ENCODE measurements at regions of chr2 and their contacts with region 1.

Region 1: DNA sequence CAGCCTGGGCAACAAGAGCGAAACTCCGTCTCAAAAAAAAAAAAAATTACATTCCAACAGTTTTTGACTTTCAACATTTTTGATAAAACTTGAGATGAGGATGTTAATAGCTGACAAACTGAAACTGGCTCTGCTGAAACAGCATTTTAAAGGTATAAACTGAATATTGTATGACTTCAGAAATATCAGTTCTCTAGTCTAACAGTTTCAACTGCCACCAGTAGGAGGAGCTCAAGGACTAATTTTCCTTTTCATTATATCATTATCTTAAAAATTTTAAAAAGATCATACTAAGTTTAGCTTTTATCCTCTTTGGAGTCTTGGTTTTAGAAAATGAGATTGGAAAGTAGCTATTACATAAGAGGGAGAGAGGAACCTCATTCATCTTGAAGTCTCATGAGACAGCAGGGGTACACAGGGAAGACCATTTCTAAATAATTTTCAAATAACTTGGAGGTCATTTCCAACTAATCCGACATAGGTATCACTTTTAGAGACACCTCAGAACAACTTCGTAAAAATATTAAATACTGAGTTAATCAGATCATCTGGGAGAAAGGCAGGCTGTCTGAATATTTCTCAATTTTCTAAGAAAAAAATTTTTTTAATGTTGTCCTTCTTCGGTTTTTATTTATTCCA is 37.6 kb upstream of the MCM6 start:
- DNase-seq: peak in 6 of 9 experiments; percentile 23 to 76 (median 52)
- ATAC-seq: peak; percentile 64
- H3K4me3 ChIP-seq: no peak overlapping the region
- H3K4me3 Mint-ChIP-seq: no peak overlapping the region
- H3K27ac ChIP-seq: no peak overlapping the region
- H3K27ac Mint-ChIP-seq: no peak overlapping the region
- H3K4me1 ChIP-seq: no peaks in the 10 kb centered on the region
- H3K4me1 Mint-ChIP-seq: peaks cover 4% of the 10 kb centered on the region
- H3K27me3 ChIP-seq: no peaks in the 10 kb centered on the region
- H3K27me3 Mint-ChIP-seq: no peaks in the 10 kb centered on the region
- CTCF ChIP-seq: peak; percentile 99

Region 2: DNA sequence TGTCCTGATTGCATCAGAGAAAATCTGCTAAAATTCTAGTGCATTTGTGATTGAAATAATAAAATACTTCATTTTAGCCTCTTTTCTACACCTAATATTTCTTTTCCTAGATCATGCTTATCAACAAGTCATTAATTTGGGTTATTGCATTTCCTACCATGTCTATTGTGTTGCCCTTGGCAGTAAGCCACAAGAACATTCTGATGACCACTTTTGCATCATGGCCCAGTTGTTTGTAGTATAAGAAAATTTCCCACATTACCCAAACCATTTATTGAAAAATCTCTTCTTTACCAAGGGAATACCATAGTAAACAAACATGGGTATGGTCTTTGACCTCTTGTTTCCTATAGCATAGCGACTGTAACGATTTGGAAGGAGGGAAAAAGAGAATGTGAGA is 306.3 kb before region 1 on chr2:
- CTCF ChIA-PET with region 1: no interaction called
- POLR2A ChIA-PET with region 1: no interaction called
- intact Hi-C with region 1: no loop called
- DNase-seq: no peak
- ATAC-seq: no peak
- H3K4me3 ChIP-seq: no peak overlapping the region
- H3K4me3 Mint-ChIP-seq: no peak overlapping the region
- H3K27ac ChIP-seq: no peak overlapping the region
- H3K27ac Mint-ChIP-seq: no peak overlapping the region
- H3K4me1 ChIP-seq: no peaks in the 10 kb centered on the region
- H3K4me1 Mint-ChIP-seq: no peaks in the 10 kb centered on the region
- H3K27me3 ChIP-seq: no peaks in the 10 kb centered on the region
- H3K27me3 Mint-ChIP-seq: no peaks in the 10 kb centered on the region
- CTCF ChIP-seq: no peak

Region 3: DNA sequence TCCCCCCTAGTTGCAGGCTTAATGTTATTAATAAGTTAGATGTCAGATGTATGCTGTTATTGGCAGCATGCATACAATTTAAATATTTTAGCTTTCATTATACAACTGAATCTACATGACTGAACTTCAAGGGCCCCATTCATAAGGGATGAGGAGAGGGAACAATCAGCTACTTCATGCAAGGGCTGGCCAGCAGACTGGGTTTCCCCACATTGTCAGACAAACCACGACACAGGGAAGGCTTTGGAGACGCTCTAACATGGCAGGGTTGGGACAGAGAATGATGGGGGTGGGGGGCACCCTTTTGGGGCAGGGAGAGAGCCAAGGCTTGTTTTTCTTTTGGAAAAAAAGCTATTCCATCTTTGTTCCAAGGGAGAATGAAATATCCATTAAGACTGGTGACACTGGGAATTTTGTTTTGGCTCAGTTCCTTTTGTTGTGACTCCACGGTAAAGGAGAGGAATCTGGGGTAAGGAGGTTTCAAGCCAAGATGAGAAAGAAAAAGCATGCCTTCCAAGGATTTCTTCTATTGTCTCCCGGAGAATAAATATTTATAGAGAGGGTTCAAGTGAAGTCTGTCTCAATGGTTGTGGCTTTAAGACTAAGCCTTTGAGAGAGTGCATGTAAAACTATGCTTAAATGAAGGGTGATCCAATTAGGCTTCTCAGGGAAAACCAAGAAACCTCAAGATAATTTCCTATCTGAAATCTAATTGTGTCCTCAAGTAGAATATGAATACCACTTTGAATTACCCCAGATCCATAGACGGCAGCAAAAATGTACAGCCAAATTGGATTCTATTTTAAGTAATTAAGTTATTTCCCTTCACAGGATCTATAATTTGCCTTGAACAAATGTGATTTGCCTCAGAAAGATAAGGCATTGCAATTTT is 198.7 kb after region 1 on chr2:
- CTCF ChIA-PET with region 1: interaction called, 4 read pairs
- POLR2A ChIA-PET with region 1: no interaction called
- intact Hi-C with region 1: loop called (anchors 2 kb)
- DNase-seq: peak in 3 of 9 experiments; percentile 58 to 71 (median 69)
- ATAC-seq: no peak
- H3K4me3 ChIP-seq: no peak overlapping the region
- H3K4me3 Mint-ChIP-seq: no peak overlapping the region
- H3K27ac ChIP-seq: no peak overlapping the region
- H3K27ac Mint-ChIP-seq: peak overlapping the region; percentile 66
- H3K4me1 ChIP-seq: peaks cover 34% of the 10 kb centered on the region
- H3K4me1 Mint-ChIP-seq: peaks cover 35% of the 10 kb centered on the region
- H3K27me3 ChIP-seq: no peaks in the 10 kb centered on the region
- H3K27me3 Mint-ChIP-seq: no peaks in the 10 kb centered on the region
- CTCF ChIP-seq: no peak

Region 4: DNA sequence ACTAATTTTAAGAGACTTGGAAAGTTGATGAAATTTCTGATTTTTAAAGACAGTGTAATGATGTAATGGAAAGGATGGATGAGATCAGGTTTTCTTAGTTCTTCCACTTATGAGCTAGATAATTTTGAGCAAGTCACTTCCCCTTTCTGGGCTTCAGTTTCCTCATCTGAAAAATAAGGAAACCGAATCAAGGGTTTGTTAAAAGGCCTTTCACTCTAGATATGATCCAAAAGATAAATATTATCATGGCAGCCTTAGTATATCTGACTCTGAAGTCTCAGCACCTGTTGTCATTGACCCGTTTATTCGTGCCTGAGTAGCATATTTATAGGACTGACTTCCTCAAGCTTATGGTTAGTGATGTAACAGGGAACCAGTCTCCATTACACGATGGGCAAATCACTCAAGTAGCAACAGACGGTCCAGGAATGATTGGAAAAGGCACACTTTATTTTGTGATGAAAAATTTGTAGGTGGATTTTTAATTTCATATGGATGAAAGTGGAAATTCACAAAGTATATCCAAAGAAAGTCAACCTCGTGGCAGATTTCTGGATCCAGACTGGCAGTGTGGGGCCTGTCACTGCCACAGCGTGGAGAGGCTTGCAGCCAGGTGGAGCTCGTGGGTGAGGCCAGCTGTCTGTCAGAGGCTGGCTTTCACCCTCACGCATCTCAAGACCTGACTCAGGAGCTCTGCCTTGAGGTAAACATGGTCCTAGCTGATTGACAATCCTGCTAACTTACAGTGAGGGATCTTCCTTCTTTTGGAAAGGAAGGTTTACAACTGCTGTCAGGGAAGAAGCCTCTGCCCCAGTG is 342.0 kb after region 1 on chr2:
- CTCF ChIA-PET with region 1: no interaction called
- POLR2A ChIA-PET with region 1: no interaction called
- intact Hi-C with region 1: loop called in 1 of 2 experiments (anchors 10 kb)
- DNase-seq: peak in 4 of 9 experiments; percentile 34 to 57 (median 41)
- ATAC-seq: peak; percentile 77
- H3K4me3 ChIP-seq: no peak overlapping the region
- H3K4me3 Mint-ChIP-seq: no peak overlapping the region
- H3K27ac ChIP-seq: no peak overlapping the region
- H3K27ac Mint-ChIP-seq: peak overlapping the region; percentile 72
- H3K4me1 ChIP-seq: no peaks in the 10 kb centered on the region
- H3K4me1 Mint-ChIP-seq: peaks cover 28% of the 10 kb centered on the region
- H3K27me3 ChIP-seq: no peaks in the 10 kb centered on the region
- H3K27me3 Mint-ChIP-seq: no peaks in the 10 kb centered on the region
- CTCF ChIP-seq: no peak

Region 5: GRCh38 chr2:136378712-136379595 is 465.1 kb after region 1 on chr2:
- CTCF ChIA-PET with region 1: interaction called, 370 read pairs
- POLR2A ChIA-PET with region 1: interaction called, 18 read pairs
- intact Hi-C with region 1: loop called (anchors 1 kb)
- DNase-seq: peak; percentile 57 to 88 (median 81)
- ATAC-seq: peak; percentile 40
- H3K4me3 ChIP-seq: no peak overlapping the region
- H3K4me3 Mint-ChIP-seq: no peak overlapping the region
- H3K27ac ChIP-seq: no peak overlapping the region
- H3K27ac Mint-ChIP-seq: peak overlapping the region; percentile 72
- H3K4me1 ChIP-seq: peaks cover 46% of the 10 kb centered on the region
- H3K4me1 Mint-ChIP-seq: peaks cover 71% of the 10 kb centered on the region
- H3K27me3 ChIP-seq: no peaks in the 10 kb centered on the region
- H3K27me3 Mint-ChIP-seq: no peaks in the 10 kb centered on the region
- CTCF ChIP-seq: peak; percentile 86

Region 6: DNA sequence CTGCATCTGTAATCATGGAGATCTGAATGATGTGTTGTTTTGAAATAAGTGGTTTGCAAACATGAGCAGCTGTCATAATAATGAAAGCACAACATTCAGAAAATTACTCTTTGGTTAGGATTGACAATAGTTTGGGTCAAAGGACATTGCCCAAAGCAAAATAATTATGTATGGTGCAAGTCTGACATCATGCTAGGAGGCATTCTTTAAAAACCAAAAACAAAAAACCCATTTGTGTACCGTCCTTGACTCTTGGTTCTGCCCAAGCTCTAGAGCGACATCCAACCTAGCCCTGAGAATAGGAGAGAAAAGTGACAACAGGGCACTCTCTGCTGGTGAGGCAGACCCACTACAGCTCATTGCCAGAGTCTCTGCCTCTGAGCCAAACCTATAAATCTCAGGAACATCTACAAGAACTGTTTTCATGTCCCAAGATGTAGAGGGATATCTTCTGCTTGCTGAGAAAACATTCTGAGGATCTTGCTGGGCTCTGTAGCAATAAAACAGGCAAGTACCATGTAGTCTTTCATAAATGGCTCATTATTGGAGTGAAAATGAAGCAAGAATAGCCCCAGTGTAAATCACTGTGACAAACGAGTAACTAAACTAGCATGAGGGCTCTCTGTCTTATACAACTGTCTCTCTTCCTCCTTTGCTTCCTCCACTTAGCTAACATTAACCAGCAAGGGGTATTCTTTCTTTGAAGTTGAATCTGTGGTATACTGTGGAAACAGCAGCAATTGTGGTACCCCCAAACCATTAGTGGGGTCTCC is 470.9 kb after region 1 on chr2:
- CTCF ChIA-PET with region 1: interaction called, 370 read pairs
- POLR2A ChIA-PET with region 1: interaction called, 18 read pairs
- intact Hi-C with region 1: loop called (anchors 1 kb)
- DNase-seq: peak in 8 of 9 experiments; percentile 32 to 82 (median 60)
- ATAC-seq: peak; percentile 53
- H3K4me3 ChIP-seq: no peak overlapping the region
- H3K4me3 Mint-ChIP-seq: no peak overlapping the region
- H3K27ac ChIP-seq: no peak overlapping the region
- H3K27ac Mint-ChIP-seq: peak overlapping the region; percentile 69
- H3K4me1 ChIP-seq: peaks cover 25% of the 10 kb centered on the region
- H3K4me1 Mint-ChIP-seq: peaks cover 36% of the 10 kb centered on the region
- H3K27me3 ChIP-seq: no peaks in the 10 kb centered on the region
- H3K27me3 Mint-ChIP-seq: no peaks in the 10 kb centered on the region
- CTCF ChIP-seq: peak; percentile 77

Region 7: GRCh38 chr2:136423516-136423996 is 509.7 kb after region 1 on chr2:
- CTCF ChIA-PET with region 1: interaction called, 7 read pairs
- POLR2A ChIA-PET with region 1: no interaction called
- intact Hi-C with region 1: loop called in 1 of 2 experiments (anchors 1 kb)
- DNase-seq: peak; percentile 63 to 87 (median 82)
- ATAC-seq: peak; percentile 97
- H3K4me3 ChIP-seq: peak overlapping the region; percentile 55 to 65
- H3K4me3 Mint-ChIP-seq: peak overlapping the region; percentile 84
- H3K27ac ChIP-seq: no peak overlapping the region
- H3K27ac Mint-ChIP-seq: peak overlapping the region; percentile 71
- H3K4me1 ChIP-seq: peaks cover 13% of the 10 kb centered on the region
- H3K4me1 Mint-ChIP-seq: peaks cover 17% of the 10 kb centered on the region
- H3K27me3 ChIP-seq: no peaks in the 10 kb centered on the region
- H3K27me3 Mint-ChIP-seq: peaks cover 31% of the 10 kb centered on the region
- CTCF ChIP-seq: peak; percentile 93

Region 8: DNA sequence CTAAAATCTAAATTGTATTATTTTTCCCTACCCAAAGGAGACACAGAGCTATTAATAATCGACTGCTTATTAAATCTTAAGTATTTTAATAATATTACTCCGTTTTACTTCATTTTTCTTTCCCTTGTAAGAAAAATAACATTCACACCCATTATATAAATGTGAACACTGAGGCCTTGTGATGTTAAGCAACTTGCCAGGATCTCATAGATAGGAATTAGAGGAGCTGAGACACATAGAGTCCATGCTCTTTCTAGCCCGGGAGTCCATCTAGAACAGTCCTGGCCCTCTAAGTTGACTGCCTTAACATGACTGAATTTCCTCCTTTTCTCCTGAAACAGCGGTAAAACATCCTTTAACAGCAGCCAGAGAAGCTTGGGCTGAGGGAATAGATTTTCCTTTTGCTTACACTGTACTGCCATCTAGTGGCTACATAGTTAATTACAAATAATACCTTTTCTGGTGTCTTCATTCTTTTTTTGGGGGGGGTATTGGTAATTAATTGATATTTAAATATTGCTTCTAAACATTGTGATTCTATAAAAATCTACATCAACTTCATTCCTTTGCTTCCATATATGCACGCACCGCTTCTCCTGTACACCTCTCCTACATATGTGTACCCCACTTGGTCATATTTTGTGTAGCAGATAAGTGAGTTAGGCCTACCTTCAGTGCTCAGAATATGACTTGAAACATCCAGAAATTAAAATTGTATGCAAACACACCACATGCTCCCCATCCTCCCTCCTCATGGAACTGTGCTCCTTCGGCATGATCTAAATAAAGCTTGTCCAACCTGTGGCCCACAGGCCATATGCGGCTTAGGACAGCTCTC is 1924.6 kb after region 1 on chr2:
- CTCF ChIA-PET with region 1: no interaction called
- POLR2A ChIA-PET with region 1: no interaction called
- intact Hi-C with region 1: loop called in 1 of 2 experiments (anchors 2 kb)
- DNase-seq: peak in 3 of 9 experiments; percentile 1 to 48 (median 34)
- ATAC-seq: no peak
- H3K4me3 ChIP-seq: no peak overlapping the region
- H3K4me3 Mint-ChIP-seq: no peak overlapping the region
- H3K27ac ChIP-seq: no peak overlapping the region
- H3K27ac Mint-ChIP-seq: no peak overlapping the region
- H3K4me1 ChIP-seq: no peaks in the 10 kb centered on the region
- H3K4me1 Mint-ChIP-seq: no peaks in the 10 kb centered on the region
- H3K27me3 ChIP-seq: no peaks in the 10 kb centered on the region
- H3K27me3 Mint-ChIP-seq: peaks cover 4% of the 10 kb centered on the region
- CTCF ChIP-seq: peak; percentile 70